ENCODE measurements at regions of chr17 and their contacts with region 1.

Region 1: GRCh38 chr17:74566132-74566753 is 1.1 kb downstream of the CD300H start:
- DNase-seq: peak; percentile 51 to 66
- ATAC-seq: peak in 1 of 2 experiments; percentile 67; a peak in 3 of 6 replicates
- H3K4me3 ChIP-seq: no peak overlapping the region
- H3K27ac ChIP-seq: peak overlapping the region in 1 of 2 experiments; percentile 41; a peak in 1 of 6 replicates
- H3K4me1 ChIP-seq: peaks cover 27% of the 10 kb centered on the region
- CTCF ChIP-seq: peak; percentile 68
- EP300 ChIP-seq: no peak
- POLR2A ChIP-seq: no peak
- RAD21 ChIP-seq: peak; percentile 64 to 75

Region 2: DNA sequence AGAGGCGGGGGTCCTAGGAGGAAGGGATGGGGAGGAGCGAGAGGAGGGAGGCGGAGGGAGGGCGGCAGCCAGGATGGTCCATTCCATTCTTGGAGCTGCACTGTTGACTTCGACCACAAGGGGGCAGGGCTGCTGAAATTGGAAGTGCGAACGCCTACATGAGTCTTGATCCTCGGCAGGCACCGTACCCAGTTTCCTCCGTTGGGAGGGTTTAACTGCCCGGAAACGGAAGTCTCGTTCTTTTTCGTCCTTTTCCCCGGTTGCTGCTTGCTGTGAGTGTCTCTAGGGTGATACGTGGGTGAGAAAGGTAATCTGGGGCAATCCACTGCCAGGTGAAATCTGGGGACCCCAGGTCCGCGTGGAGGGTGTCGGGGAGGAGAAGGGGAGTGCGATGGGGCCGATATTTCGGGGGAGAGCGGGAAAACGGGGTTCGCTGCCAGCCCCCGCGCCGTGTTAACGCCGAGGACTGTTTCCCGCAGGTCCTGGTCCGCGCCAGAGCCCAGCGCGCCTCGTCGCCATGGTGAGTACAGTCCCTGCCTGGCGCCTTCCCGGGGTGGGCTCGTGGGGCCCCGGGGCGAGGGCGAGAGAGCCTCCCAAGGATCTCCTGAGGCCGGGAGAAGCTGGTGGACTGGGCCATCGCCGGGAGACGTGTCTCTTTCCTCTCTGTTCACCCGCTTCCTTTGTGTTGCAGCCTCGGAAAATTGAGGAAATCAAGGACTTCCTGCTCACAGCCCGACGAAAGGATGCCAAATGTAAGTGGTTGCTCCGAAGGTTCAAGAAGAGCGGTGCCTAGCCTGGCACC is 362.6 kb before region 1 on chr17 and contains the start of gene RPL38:
- CTCF ChIA-PET with region 1: no interaction called
- POLR2A ChIA-PET with region 1: no interaction called
- DNase-seq: peak; percentile 95 to 98
- ATAC-seq: peak; percentile 59 to 77
- H3K4me3 ChIP-seq: peak within 1 kb of the TSS; percentile 71
- H3K27ac ChIP-seq: peak within 1 kb of the TSS; percentile 89 to 97
- H3K4me1 ChIP-seq: peaks cover 41% of the 10 kb centered on the region
- CTCF ChIP-seq: peak; percentile 95
- EP300 ChIP-seq: peak in 1 of 2 experiments; percentile 27; a peak in 1 of 5 replicates
- POLR2A ChIP-seq: peak; percentile 96
- RAD21 ChIP-seq: peak in 1 of 2 experiments; percentile 43; a peak in 3 of 5 replicates
- polyA plus RNA-seq, gene RPL38: 2,364 and 3,205 TPM in 2 replicates

Region 3: GRCh38 chr17:74552037-74552436 is 14.2 kb before region 1 on chr17:
- CTCF ChIA-PET with region 1: interaction called, 23 read pairs
- POLR2A ChIA-PET with region 1: interaction called, 3 read pairs
- DNase-seq: peak in 1 of 2 experiments; percentile 23
- ATAC-seq: peak; percentile 16 to 38; a peak in 4 of 6 replicates
- H3K4me3 ChIP-seq: no peak overlapping the region
- H3K27ac ChIP-seq: no peak overlapping the region
- H3K4me1 ChIP-seq: no peaks in the 10 kb centered on the region
- CTCF ChIP-seq: no peak
- EP300 ChIP-seq: no peak
- POLR2A ChIP-seq: no peak
- RAD21 ChIP-seq: no peak

Region 4: GRCh38 chr17:74592087-74592990 is 26.1 kb after region 1 on chr17 and contains the start of gene CD300LD:
- CTCF ChIA-PET with region 1: interaction called, 142 read pairs
- POLR2A ChIA-PET with region 1: interaction called, 3 read pairs
- DNase-seq: no peak
- ATAC-seq: peak; percentile 62 to 79; a peak in 5 of 6 replicates
- H3K4me3 ChIP-seq: no peak within 1 kb of the TSS
- H3K27ac ChIP-seq: peak within 1 kb of the TSS in 1 of 2 experiments; percentile 47; a peak in 1 of 6 replicates
- H3K4me1 ChIP-seq: 0 out of 3 replicates have a peak, but pooled peaks cover 3% of the 10 kb centered on the region
- CTCF ChIP-seq: no peak
- EP300 ChIP-seq: no peak
- POLR2A ChIP-seq: no peak
- RAD21 ChIP-seq: no peak
- polyA plus RNA-seq, gene CD300LD: not detected in 2 replicates

Region 5: GRCh38 chr17:74646231-74646630 is 80.0 kb after region 1 on chr17:
- CTCF ChIA-PET with region 1: interaction called, 11 read pairs
- POLR2A ChIA-PET with region 1: no interaction called
- DNase-seq: peak; percentile 62 to 74
- ATAC-seq: peak in 1 of 2 experiments; percentile 81; a peak in 3 of 6 replicates
- H3K4me3 ChIP-seq: no peak overlapping the region
- H3K27ac ChIP-seq: no peak overlapping the region
- H3K4me1 ChIP-seq: no peaks in the 10 kb centered on the region
- CTCF ChIP-seq: peak; percentile 51
- EP300 ChIP-seq: no peak
- POLR2A ChIP-seq: no peak
- RAD21 ChIP-seq: peak; percentile 38 to 62; a peak in 4 of 5 replicates